K562 (cell line): ENCODE measurements at regions of chr9 and their contacts with region 1.

Region 1: GRCh38 chr9:112905084-112905483 is 14.4 kb upstream of the SLC46A2 start:
- DNase-seq: no peak
- ATAC-seq: no peak
- H3K4me3 ChIP-seq: no peak overlapping the region
- H3K27ac ChIP-seq: no peak overlapping the region
- H3K4me1 ChIP-seq: no peaks in the 10 kb centered on the region
- H3K27me3 ChIP-seq: peaks cover 0 to 17% of the 10 kb centered on the region in 2 experiments; a peak in 1 of 5 replicates
- CTCF ChIP-seq: no peak
- EP300 ChIP-seq: no peak
- POLR2A ChIP-seq: no peak
- RAD21 ChIP-seq: no peak

Region 2: DNA sequence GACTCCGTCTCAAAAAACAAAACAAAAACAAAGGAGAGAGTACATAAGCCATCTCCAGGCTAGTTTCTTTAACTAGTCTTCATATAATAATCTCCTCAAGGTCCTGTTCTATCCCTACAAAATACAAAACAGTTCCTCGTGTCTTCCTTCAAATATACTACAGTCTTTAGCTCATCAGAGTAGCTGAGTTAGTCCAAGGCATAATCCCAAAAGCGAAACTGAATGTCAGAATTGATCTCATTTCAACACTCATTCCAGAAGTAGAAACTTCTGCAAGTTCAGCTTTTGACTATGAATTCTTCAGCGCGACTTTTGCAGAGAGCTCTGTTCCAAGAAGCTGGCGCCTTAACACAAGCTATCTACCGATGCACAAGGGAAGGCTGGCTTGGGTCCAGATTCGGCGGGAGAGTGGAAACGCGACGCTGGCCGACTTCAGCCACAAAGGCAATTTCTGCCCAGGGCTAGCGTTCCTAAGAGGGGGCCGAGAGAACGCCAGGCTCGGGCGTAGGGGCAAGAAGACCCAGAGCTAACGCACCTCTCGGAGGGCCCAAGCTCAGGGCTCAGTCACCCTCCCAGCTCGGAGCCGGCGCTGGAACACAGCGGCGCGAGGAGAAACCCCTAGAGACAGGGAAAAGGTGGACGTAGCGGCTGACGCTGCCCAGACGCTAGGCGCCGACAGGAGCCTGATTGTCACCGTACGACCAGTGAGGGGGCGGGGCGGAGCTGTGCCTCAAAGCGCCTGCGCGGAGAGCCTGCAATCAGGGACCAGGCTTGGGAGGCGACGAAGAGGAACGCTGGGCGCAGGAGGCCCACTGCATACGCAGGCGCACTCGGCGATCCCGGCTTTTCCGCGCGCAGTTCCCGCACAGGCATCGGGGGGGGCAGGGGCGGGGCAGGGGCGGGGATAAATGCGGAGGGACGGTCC is 525.6 kb before region 1 on chr9:
- CTCF ChIA-PET with region 1: no interaction called
- POLR2A ChIA-PET with region 1: no interaction called
- in situ Hi-C with region 1: no loop called
- intact Hi-C with region 1: no loop called
- DNase-seq: peak; percentile 98 to 99 (median 98)
- ATAC-seq: peak; percentile 91
- H3K4me3 ChIP-seq: peak overlapping the region; percentile 80
- H3K27ac ChIP-seq: peak overlapping the region; percentile 93
- H3K4me1 ChIP-seq: peaks cover 14 to 25% of the 10 kb centered on the region in 2 experiments
- H3K27me3 ChIP-seq: no peaks in the 10 kb centered on the region
- CTCF ChIP-seq: peak in 2 of 3 experiments; percentile 17 to 18; a peak in 2 of 6 replicates
- EP300 ChIP-seq: no peak; the same call in none of the 2 replicates
- POLR2A ChIP-seq: peak; percentile 98
- RAD21 ChIP-seq: 0 out of 4 replicates have a peak, but pooled peaks of 1 of the 2 experiments have one; percentile 25

Region 3: GRCh38 chr9:112670991-112671625 is 234.0 kb before region 1 on chr9:
- CTCF ChIA-PET with region 1: no interaction called
- POLR2A ChIA-PET with region 1: no interaction called
- in situ Hi-C with region 1: no loop called
- intact Hi-C with region 1: loop called (anchors 10 kb)
- DNase-seq: no peak
- ATAC-seq: no peak
- H3K4me3 ChIP-seq: no peak overlapping the region
- H3K27ac ChIP-seq: no peak overlapping the region
- H3K4me1 ChIP-seq: no peaks in the 10 kb centered on the region; a peak in 1 of 5 replicates
- H3K27me3 ChIP-seq: 0 out of 5 replicates have a peak, but pooled peaks cover 0 to 2% of the 10 kb centered on the region in 2 experiments
- CTCF ChIP-seq: no peak
- EP300 ChIP-seq: no peak
- POLR2A ChIP-seq: no peak
- RAD21 ChIP-seq: no peak